Calu3 (cell line): ENCODE measurements at regions of chr3 and their contacts with region 1.

Region 1: DNA sequence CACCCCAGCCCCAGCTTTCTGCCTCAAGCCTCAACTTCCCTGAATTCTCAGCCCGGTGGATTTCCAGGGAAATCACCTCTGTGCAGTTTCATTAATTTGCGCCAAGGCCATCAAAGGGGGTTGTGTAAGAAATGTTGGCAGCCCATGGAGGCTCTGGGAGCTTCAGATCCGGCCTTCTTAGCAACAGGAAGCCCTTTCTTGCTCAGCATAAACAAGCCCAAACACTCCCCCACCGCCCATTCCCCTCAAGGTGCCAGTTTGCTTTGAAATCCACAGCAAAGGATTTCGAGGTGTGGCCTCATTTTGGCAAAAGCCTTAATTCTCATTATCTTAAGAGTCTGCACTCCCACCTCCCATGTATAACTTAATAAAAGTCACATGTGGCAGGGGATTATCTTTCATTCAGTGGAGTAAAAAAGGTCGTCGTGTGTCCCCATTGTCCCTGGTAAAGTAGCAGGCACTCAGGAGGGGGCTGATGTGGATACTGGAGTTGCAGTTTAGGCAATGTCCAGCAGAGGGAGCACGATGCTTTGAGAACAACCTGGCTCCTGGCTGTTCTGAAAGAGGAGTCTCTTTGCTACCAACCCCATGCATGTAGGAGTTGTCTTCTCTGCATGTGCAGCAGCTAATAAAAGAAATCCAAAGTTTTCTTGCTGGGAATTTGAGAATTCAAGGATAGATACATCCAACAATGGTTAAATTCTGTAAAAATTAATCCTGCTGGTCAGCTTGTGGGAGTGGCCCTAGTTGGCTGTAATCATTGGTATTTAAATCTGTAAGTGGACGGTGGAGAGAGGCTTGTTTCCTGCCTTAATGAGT is 39.5 kb downstream of the EBLN2 start:
- DNase-seq: peak; percentile 82
- H3K4me3 Mint-ChIP-seq: no peak overlapping the region
- H3K27ac Mint-ChIP-seq: no peak overlapping the region
- H3K4me1 Mint-ChIP-seq: no peaks in the 10 kb centered on the region
- H3K27me3 Mint-ChIP-seq: no peaks in the 10 kb centered on the region
- CTCF ChIP-seq: peak; percentile 86

Region 2: GRCh38 chr3:72993391-72993790 is 107.6 kb before region 1 on chr3:
- CTCF ChIA-PET with region 1: no interaction called
- intact Hi-C with region 1: no loop called
- DNase-seq: no peak
- H3K4me3 Mint-ChIP-seq: no peak overlapping the region
- H3K27ac Mint-ChIP-seq: no peak overlapping the region
- H3K4me1 Mint-ChIP-seq: no peaks in the 10 kb centered on the region
- H3K27me3 Mint-ChIP-seq: no peaks in the 10 kb centered on the region
- CTCF ChIP-seq: no peak

Region 3: DNA sequence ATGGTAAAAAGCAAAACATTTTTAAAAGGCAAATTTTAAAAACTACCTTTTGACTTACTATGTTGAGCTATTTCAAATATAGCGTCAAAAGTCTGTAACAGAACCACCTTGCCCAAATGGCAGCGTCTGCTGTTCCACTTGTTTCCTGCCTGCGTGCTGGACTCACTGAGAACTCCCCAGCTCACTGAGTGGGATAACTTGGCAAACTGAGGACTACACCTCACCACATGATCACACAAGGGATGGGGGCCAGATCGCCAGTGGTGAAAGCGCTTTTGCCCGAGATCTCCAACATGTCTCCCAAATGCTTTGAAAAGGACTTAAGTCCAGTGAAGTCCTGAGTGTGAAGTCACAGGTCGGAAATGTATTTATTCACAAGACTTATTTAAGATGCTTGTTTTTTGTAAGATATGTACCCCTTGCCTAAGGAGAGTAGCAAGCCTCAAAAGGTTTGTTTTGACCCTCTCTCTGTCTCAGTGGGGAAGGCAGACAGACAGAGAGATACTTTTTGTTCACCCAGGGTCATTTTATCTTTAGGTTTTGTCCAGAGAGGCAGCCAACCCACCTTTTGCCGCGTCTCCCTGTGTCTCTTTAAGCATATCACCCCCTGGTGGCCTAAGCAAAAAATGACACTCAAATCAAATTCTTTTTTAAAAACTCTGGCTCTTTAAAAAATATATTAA is 331.2 kb after region 1 on chr3:
- CTCF ChIA-PET with region 1: no interaction called
- intact Hi-C with region 1: loop called (anchors 1 kb)
- DNase-seq: peak; percentile 9
- H3K4me3 Mint-ChIP-seq: no peak overlapping the region
- H3K27ac Mint-ChIP-seq: no peak overlapping the region
- H3K4me1 Mint-ChIP-seq: no peaks in the 10 kb centered on the region
- H3K27me3 Mint-ChIP-seq: peaks cover 63% of the 10 kb centered on the region
- CTCF ChIP-seq: peak; percentile 39

Region 4: DNA sequence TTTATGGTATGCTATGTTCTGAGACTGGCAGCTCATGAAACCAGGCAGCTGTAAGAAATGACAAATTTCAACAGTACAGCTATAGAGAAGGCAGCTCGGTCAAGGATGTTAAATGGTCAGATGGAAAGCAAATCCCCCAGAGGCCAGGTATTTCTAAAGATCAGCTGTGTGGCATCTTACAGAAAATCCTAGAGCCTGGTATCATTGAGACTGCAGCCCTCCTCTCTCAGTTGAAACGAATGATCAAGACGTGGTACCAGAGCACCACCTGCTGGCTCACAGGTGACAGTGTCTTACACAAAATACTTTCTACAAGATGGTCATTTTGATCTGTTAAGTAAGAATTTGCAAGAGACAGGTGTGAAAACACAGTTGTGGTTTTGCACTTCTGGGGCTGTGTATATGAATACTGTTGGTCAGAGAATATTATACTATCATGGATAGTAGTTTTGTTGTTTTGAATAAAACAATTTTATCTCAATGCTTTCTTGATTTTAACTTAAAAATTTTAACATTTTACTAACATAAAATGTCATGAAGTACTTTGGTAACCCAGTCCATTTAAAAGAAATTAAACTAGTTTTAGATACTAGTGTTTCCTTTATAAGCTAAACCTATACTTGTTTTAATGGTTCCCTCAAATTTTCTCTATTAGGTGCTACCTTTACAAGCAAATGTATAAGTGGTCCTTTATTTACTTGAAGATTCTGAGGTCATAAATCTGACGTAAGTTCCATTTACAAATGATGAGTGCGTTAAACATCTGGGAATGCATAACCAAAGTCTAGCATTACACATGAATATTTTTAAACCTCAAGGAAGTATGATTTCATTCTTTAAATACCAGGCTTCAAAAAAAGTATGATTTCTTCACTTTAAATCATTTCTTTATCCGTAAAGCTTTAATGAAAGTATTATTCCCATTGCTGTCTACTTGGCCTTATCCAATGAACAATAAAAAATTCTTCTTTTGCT is 401.9 kb after region 1 on chr3:
- CTCF ChIA-PET with region 1: interaction called, 3 read pairs
- intact Hi-C with region 1: loop called (anchors 1 kb)
- DNase-seq: peak; percentile 63
- H3K4me3 Mint-ChIP-seq: no peak overlapping the region
- H3K27ac Mint-ChIP-seq: no peak overlapping the region
- H3K4me1 Mint-ChIP-seq: no peaks in the 10 kb centered on the region
- H3K27me3 Mint-ChIP-seq: peaks cover 37% of the 10 kb centered on the region
- CTCF ChIP-seq: peak; percentile 62